ENCODE measurements at regions of chr14 and their contacts with region 1.

Region 1: GRCh38 chr14:77738559-77739250 is 22.3 kb downstream of the SNW1 start:
- H3K4me3 Mint-ChIP-seq: no peak overlapping the region
- H3K27ac Mint-ChIP-seq: no peak overlapping the region
- H3K4me1 Mint-ChIP-seq: peaks cover 5% of the 10 kb centered on the region
- H3K27me3 Mint-ChIP-seq: no peaks in the 10 kb centered on the region

Region 2: DNA sequence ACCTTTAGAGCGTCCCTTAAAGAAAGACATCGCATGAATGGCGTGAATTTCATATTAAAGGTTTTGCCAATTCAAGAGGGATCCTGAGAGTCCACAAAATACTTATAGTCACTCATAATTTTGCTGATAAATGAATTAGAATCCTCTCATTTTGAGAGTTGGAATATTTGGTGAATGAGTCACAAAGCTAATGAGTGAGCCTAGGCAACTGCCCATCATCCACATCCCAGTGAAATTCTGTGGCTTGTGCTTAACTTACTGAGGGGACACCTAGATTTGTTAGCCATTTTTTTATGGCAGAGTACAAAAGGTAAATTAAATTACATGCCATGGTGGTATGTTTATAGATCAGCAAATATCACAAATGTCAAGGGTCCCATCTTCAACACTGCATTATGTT is 302.7 kb before region 1 on chr14:
- intact Hi-C with region 1: loop called (anchors 10 kb)
- H3K4me3 Mint-ChIP-seq: no peak overlapping the region
- H3K27ac Mint-ChIP-seq: no peak overlapping the region
- H3K4me1 Mint-ChIP-seq: no peaks in the 10 kb centered on the region
- H3K27me3 Mint-ChIP-seq: no peaks in the 10 kb centered on the region

Region 3: DNA sequence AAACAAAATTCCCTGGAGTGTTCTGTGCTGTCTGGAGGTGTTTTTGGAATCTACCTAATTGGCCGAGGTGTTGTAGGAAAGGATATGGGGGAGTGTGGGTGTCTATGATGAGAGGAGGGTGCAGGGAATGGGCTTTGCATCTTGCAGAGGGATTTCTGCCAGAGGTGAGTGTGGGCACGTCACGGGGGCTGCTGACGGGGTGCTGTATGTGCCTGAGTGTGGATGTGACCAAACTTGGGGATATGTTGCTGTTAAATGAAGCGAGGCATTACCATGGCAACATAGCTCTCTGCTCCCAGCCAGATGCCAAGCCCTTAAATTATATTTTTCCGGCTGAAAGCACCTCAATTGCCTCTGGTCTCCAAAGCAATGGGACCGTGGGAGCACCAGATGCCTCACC is 78.0 kb before region 1 on chr14:
- intact Hi-C with region 1: no loop called
- H3K4me3 Mint-ChIP-seq: no peak overlapping the region
- H3K27ac Mint-ChIP-seq: no peak overlapping the region
- H3K4me1 Mint-ChIP-seq: peaks cover 47% of the 10 kb centered on the region
- H3K27me3 Mint-ChIP-seq: no peaks in the 10 kb centered on the region

Region 4: GRCh38 chr14:77691259-77691658 is 47.4 kb before region 1 on chr14:
- intact Hi-C with region 1: no loop called
- H3K4me3 Mint-ChIP-seq: no peak overlapping the region
- H3K27ac Mint-ChIP-seq: no peak overlapping the region
- H3K4me1 Mint-ChIP-seq: peaks cover 5% of the 10 kb centered on the region
- H3K27me3 Mint-ChIP-seq: no peaks in the 10 kb centered on the region

Measured in dendritic cell treated with granulocyte-macrophage colony-stimulating factor and Interleukin-4, amounts not matched to agents 40 ng/mL and 50 ng/mL, for 4 days (primary cell).